K562 (cell line): ENCODE measurements at regions of chr9 and their contacts with region 1.

Region 1: DNA sequence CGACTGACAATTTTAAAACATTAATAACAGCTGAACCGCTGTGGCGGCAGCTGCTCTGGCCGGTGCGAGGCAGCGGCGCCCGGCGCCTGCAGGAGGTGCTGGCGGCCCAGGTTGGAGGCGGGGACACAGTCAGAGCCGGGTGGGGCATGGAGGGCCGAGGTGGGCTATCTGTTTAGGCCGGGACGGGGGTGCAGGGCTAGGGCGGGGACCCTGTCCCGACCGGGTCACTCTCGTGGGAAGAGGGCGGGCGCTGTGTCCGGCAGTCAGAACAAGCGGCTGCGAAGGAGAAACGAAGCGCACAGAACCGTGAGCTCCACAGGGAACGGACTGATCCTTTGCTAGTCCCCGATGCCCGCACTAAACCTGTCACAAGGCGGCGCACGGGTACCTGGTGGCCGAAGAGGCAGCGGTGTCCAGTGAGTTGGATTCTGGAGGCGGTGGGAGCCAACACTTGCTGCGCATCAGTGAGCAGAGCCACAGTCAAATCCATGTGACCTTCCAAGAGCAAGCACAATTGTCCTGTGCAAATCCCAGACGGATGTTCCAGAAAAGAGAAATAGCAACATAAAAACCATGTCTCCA is 13.7 kb upstream of the ALDOB start:
- DNase-seq: peak; percentile 72 to 86 (median 78)
- ATAC-seq: peak; percentile 100
- H3K4me3 ChIP-seq: peak overlapping the region; percentile 67
- H3K27ac ChIP-seq: 0 out of 3 replicates have a peak overlapping the region, but pooled peaks have one; percentile 26
- H3K4me1 ChIP-seq: peaks cover 0 to 6% of the 10 kb centered on the region in 2 experiments; a peak in 1 of 5 replicates
- H3K27me3 ChIP-seq: no peaks in the 10 kb centered on the region
- CTCF ChIP-seq: peak; percentile 65 to 85 (median 80)
- EP300 ChIP-seq: no peak
- POLR2A ChIP-seq: no peak
- RAD21 ChIP-seq: peak; percentile 63 to 66

Region 2: GRCh38 chr9:101398068-101398929 is 50.9 kb before region 1 on chr9 and contains the starts of genes MRPL50 and ZNF189:
- CTCF ChIA-PET with region 1: no interaction called
- POLR2A ChIA-PET with region 1: no interaction called
- in situ Hi-C with region 1: no loop called
- intact Hi-C with region 1: loop called (anchors 5 kb)
- DNase-seq: peak; percentile 88 to 98 (median 92)
- ATAC-seq: peak; percentile 97
- H3K4me3 ChIP-seq: peak within 1 kb of the TSS; percentile 79
- H3K27ac ChIP-seq: peak within 1 kb of the TSS; percentile 96
- H3K4me1 ChIP-seq: peaks cover 11 to 17% of the 10 kb centered on the region in 2 experiments; a peak in 3 of 5 replicates
- H3K27me3 ChIP-seq: no peaks in the 10 kb centered on the region
- CTCF ChIP-seq: 0 out of 6 replicates have a peak, but pooled peaks of 1 of the 3 experiments have one; percentile 13
- EP300 ChIP-seq: no peak
- POLR2A ChIP-seq: peak; percentile 98
- RAD21 ChIP-seq: no peak
- polyA plus RNA-seq, gene MRPL50: 80.1 to 107 TPM
- polyA plus RNA-seq, gene ZNF189: 2.4 to 3.5 TPM

Region 3: DNA sequence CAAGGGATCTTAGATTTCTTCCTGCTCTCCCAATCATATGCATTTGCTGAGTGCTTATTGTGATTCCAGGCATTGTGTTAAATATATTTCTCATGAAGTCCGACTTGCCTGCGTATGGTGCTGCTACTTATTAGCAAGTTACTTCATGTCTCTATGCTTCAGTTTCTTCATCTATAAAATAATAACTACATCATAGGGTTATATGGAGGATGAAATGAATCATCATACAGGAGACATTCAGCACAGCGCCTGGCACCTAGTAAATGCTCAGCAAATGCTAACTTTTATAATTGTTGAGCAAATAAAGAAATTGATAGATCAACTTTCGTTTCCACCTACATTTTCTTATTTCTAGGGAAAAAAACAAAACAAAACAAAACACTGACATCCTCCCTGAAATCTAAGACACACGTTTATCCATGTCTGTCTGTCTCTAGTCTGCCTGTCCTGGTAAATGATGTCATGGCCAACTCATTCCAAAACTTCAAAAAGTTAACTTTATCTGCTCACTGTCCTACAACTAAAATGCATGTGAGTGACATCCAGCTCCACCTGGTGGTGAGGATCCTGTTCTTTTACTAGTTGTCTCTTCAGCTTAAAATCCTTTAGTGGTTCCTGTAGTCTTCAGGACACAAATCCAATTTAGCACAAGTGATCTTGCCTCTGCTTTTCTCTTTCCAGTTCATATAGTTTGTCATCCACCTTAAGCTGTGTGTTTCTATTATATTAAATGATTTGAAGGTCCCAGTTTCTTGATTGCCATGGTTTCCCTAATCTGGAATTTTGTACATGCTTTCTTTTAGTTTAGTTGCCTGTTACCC is 117.9 kb after region 1 on chr9:
- CTCF ChIA-PET with region 1: interaction called, 7 read pairs
- POLR2A ChIA-PET with region 1: no interaction called
- in situ Hi-C with region 1: no loop called
- intact Hi-C with region 1: loop called (anchors 1 kb)
- DNase-seq: peak; percentile 34 to 64 (median 39)
- ATAC-seq: peak; percentile 74
- H3K4me3 ChIP-seq: no peak overlapping the region
- H3K27ac ChIP-seq: no peak overlapping the region
- H3K4me1 ChIP-seq: peaks cover 17 to 27% of the 10 kb centered on the region in 2 experiments
- H3K27me3 ChIP-seq: no peaks in the 10 kb centered on the region
- CTCF ChIP-seq: peak; percentile 47 to 63 (median 56); a peak in 5 of 6 replicates
- EP300 ChIP-seq: no peak
- POLR2A ChIP-seq: no peak
- RAD21 ChIP-seq: peak; percentile 31 to 63; a peak in 3 of 4 replicates